ENCODE measurements at regions of chr9 and their contacts with region 1.

Region 1: GRCh38 chr9:68719842-68720241 is 14.8 kb downstream of the PIP5K1B start:
- DNase-seq: no peak
- ATAC-seq: no peak
- H3K4me3 Mint-ChIP-seq: no peak overlapping the region
- H3K27ac Mint-ChIP-seq: no peak overlapping the region
- H3K4me1 Mint-ChIP-seq: peaks cover 39% of the 10 kb centered on the region
- H3K27me3 Mint-ChIP-seq: no peaks in the 10 kb centered on the region
- CTCF ChIP-seq: no peak

Region 2: DNA sequence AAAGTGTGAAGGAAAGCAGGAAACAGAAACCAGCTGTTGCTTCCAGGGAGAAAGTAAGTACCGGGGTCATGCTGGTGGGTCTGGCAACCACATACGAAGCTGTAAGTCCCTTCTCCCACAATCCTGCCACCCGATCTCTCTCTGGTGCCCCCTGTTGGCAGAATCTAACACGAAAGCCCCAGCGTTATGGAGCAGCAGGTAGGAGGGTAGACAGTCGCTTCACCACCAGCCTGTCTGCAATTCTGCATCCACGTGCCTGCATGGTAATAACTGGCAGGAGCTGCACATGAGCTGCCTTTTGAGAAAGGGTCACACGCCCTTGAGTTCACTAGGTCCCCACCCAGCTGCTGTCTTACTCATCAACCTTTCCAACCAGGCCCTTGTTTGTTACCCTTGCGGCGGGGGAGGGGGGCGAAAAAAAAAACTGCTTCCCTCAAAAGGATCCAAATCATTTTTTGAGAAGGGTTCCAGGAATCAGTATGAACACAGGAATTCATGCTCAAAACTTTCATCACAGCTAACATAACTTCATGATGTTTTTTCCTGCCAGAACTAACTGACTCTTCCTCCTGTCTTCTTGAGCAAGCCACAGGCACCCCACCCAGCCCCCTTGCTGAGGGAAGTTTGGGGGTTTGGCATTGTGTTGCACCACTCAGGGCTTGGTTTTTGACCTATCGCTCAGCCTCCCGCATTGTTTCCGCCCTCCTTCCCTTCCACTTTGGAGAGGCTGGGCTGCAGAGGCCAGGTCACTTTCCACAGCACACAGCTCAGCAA is 159.6 kb before region 1 on chr9:
- CTCF ChIA-PET with region 1: no interaction called
- POLR2A ChIA-PET with region 1: no interaction called
- intact Hi-C with region 1: no loop called
- DNase-seq: peak; percentile 36
- ATAC-seq: peak; percentile 85
- H3K4me3 Mint-ChIP-seq: peak overlapping the region; percentile 53
- H3K27ac Mint-ChIP-seq: no peak overlapping the region
- H3K4me1 Mint-ChIP-seq: peaks cover 18% of the 10 kb centered on the region
- H3K27me3 Mint-ChIP-seq: peaks cover 7% of the 10 kb centered on the region
- CTCF ChIP-seq: no peak

Region 3: DNA sequence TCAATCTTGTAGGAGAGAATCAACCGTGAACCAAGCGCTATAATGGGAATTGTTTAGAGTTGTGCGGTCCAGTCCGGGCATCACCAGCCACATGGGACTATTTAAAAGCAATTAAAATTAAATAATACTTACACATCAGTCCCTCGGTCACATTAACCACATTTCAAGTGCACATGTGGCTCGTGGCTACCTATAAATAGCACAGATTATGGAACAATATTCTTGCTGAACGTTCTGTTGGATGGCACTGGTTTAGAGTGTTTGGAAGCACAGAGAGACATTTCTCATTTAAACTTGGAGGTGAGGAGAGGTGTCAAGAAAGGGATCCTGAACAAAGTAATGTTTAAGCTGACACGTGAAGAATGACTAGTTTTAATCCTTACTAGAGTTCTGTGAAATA is 27.3 kb before region 1 on chr9:
- CTCF ChIA-PET with region 1: no interaction called
- POLR2A ChIA-PET with region 1: no interaction called
- intact Hi-C with region 1: no loop called
- DNase-seq: no peak
- ATAC-seq: no peak
- H3K4me3 Mint-ChIP-seq: no peak overlapping the region
- H3K27ac Mint-ChIP-seq: no peak overlapping the region
- H3K4me1 Mint-ChIP-seq: no peaks in the 10 kb centered on the region
- H3K27me3 Mint-ChIP-seq: no peaks in the 10 kb centered on the region
- CTCF ChIP-seq: no peak

Region 4: GRCh38 chr9:68704814-68705530 is 14.9 kb before region 1 on chr9 and contains the start of gene PIP5K1B:
- CTCF ChIA-PET with region 1: no interaction called
- POLR2A ChIA-PET with region 1: interaction called, 3 read pairs
- intact Hi-C with region 1: loop called (anchors 1 kb)
- DNase-seq: peak; percentile 76
- ATAC-seq: peak; percentile 85
- H3K4me3 Mint-ChIP-seq: peak within 1 kb of the TSS; percentile 97
- H3K27ac Mint-ChIP-seq: peak within 1 kb of the TSS; percentile 82
- H3K4me1 Mint-ChIP-seq: peaks cover 50% of the 10 kb centered on the region
- H3K27me3 Mint-ChIP-seq: no peaks in the 10 kb centered on the region
- CTCF ChIP-seq: no peak
- total RNA-seq, gene PIP5K1B: 17.1 and 22.0 TPM in 2 replicates

Region 5: GRCh38 chr9:68876681-68877080 is 156.8 kb after region 1 on chr9:
- CTCF ChIA-PET with region 1: no interaction called
- POLR2A ChIA-PET with region 1: no interaction called
- intact Hi-C with region 1: no loop called
- DNase-seq: no peak
- ATAC-seq: no peak
- H3K4me3 Mint-ChIP-seq: no peak overlapping the region
- H3K27ac Mint-ChIP-seq: no peak overlapping the region
- H3K4me1 Mint-ChIP-seq: no peaks in the 10 kb centered on the region
- H3K27me3 Mint-ChIP-seq: no peaks in the 10 kb centered on the region
- CTCF ChIP-seq: no peak

Region 6: DNA sequence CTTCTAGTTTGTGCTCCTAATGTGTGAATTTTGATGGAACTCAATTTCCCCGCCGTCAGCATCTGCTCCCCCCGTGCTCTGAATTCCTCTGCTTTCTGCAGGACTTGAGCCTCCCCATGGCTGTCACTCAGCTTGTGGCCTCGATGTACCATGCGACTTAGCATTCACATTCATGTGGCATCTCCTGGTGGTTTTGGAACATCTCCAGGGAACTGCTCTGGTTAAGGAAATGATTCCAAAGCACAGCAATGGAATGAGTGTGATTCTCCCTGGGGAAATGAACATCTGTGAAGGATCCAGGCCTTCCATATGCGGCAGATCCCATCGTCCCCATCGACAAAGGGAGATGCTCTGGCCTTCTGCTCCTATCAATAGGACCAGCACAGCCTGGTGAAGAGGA is 724.2 kb after region 1 on chr9:
- CTCF ChIA-PET with region 1: no interaction called
- POLR2A ChIA-PET with region 1: no interaction called
- intact Hi-C with region 1: no loop called
- DNase-seq: no peak
- ATAC-seq: no peak
- H3K4me3 Mint-ChIP-seq: no peak overlapping the region
- H3K27ac Mint-ChIP-seq: no peak overlapping the region
- H3K4me1 Mint-ChIP-seq: no peaks in the 10 kb centered on the region
- H3K27me3 Mint-ChIP-seq: peaks cover 5% of the 10 kb centered on the region
- CTCF ChIP-seq: no peak

Measured in activated B cell treated with CpG ODN at 0.5 μM for 24 hours (primary cell).